HepG2 (cell line): ENCODE measurements at regions of chr10 and their contacts with region 1.

Region 1: GRCh38 chr10:91643700-91644099 is 10.8 kb upstream of the PPP1R3C start:
- DNase-seq: peak; percentile 24
- ATAC-seq: peak; percentile 89
- H3K4me3 ChIP-seq: no peak overlapping the region
- H3K27ac ChIP-seq: no peak overlapping the region
- H3K4me1 ChIP-seq: no peaks in the 10 kb centered on the region
- H3K27me3 ChIP-seq: peaks cover 0 to 1% of the 10 kb centered on the region in 2 experiments; a peak in 1 of 5 replicates
- CTCF ChIP-seq: peak; percentile 76
- EP300 ChIP-seq: no peak
- POLR2A ChIP-seq: no peak
- RAD21 ChIP-seq: peak; percentile 52

Region 2: GRCh38 chr10:91694170-91694794 is 50.6 kb after region 1 on chr10:
- CTCF ChIA-PET with region 1: interaction called, 4 read pairs
- POLR2A ChIA-PET with region 1: no interaction called
- in situ Hi-C with region 1: no loop called
- intact Hi-C with region 1: loop called (anchors 1 kb)
- DNase-seq: peak; percentile 38
- ATAC-seq: peak; percentile 50; the same call in 2 of the 3 replicates
- H3K4me3 ChIP-seq: no peak overlapping the region
- H3K27ac ChIP-seq: no peak overlapping the region
- H3K4me1 ChIP-seq: no peaks in the 10 kb centered on the region
- H3K27me3 ChIP-seq: no peaks in the 10 kb centered on the region
- CTCF ChIP-seq: peak; percentile 76
- EP300 ChIP-seq: no peak
- POLR2A ChIP-seq: no peak
- RAD21 ChIP-seq: no peak

Region 3: DNA sequence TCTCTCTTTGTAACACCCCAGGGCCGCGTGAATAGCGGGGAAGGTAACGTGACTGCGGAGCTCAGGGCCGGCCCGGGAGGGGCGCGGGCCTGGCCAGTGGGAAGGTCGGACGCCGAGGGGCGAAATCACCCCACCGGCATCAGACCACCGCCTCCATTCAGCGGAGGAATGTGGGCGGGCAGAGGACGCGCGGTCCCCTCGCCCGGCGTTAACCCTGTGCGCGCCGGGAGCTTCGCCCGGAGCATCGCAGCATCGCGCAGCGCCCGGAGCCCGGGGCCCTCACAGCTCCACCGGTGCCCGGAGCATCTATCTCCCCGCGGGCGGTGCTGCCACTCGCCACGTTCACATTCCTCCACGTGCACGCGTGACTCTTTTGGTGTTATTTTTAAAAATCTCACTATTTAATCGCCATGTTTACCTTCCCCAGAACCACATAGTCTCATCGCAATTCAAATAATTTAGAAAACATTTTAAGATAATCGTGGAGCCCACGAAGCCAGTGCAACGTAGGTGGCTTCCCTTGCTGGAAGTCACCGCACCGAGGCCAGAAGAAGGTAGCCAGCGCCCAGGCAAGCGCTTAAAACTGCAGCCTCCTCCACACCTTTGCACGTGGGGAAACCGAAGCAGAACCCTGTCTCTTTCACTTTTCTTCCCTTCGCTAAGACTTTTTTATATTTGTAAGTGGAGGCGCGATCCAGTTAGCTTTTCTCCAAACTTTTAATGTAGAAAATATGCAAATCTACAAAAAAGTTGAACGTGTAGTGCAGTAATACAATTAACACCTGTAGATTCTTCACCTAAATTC is 243.8 kb after region 1 on chr10:
- CTCF ChIA-PET with region 1: no interaction called
- POLR2A ChIA-PET with region 1: no interaction called
- in situ Hi-C with region 1: no loop called
- intact Hi-C with region 1: no loop called
- DNase-seq: peak; percentile 58
- ATAC-seq: peak; percentile 86
- H3K4me3 ChIP-seq: peak overlapping the region; percentile 56 to 69 (median 60)
- H3K27ac ChIP-seq: peak overlapping the region; percentile 20
- H3K4me1 ChIP-seq: peaks cover 51% of the 10 kb centered on the region
- H3K27me3 ChIP-seq: peaks cover 0 to 10% of the 10 kb centered on the region in 2 experiments; a peak in 1 of 5 replicates
- CTCF ChIP-seq: no peak
- EP300 ChIP-seq: no peak
- POLR2A ChIP-seq: no peak
- RAD21 ChIP-seq: no peak